Heart left ventricle (tissue), 16 donors: ENCODE measurements at regions of chr17 and their contacts with region 1.

Region 1: DNA sequence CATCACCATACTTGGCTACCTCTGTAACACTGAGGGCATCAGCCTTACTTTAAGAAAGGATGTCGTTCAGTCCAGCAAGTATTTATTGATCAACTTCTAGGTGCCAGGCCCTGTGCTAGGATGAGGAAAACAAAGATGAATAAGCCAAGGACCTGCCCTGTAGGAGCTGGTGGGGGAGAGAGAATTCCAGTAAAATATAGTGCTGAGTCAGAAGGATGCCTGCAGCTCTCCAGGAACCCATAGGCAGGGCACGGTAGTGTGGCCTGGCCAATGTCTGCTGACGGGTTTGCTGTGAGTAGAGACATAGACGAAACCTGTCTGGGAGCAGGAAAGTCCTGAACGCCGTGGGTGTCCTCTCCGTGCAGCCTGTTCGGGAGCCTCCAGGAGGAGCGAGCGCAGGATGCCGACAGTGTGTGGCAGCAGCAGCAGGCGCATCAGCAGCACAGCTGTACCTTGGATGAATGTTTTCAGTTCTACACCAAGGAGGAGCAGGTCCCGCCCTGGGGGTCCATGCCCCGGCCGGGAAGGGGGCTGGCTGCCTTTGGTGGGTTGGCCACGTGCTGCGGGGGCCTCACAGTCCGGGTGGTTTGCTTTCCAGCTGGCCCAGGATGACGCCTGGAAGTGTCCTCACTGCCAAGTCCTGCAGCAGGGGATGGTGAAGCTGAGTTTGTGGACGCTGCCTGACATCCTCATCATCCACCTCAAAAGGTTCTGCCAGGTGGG is 55.6 kb downstream of the USP43 start:
- DNase-seq: no peak
- ATAC-seq: no peak
- H3K4me3 ChIP-seq: no peak overlapping the region
- H3K27ac ChIP-seq: no peak overlapping the region
- H3K4me1 ChIP-seq: no peaks in the 10 kb centered on the region
- H3K27me3 ChIP-seq: peaks cover 0 to 2% (median 0%) of the 10 kb centered on the region in 9 donors
- CTCF ChIP-seq: no peak
- POLR2A ChIP-seq: no peak

Region 2: DNA sequence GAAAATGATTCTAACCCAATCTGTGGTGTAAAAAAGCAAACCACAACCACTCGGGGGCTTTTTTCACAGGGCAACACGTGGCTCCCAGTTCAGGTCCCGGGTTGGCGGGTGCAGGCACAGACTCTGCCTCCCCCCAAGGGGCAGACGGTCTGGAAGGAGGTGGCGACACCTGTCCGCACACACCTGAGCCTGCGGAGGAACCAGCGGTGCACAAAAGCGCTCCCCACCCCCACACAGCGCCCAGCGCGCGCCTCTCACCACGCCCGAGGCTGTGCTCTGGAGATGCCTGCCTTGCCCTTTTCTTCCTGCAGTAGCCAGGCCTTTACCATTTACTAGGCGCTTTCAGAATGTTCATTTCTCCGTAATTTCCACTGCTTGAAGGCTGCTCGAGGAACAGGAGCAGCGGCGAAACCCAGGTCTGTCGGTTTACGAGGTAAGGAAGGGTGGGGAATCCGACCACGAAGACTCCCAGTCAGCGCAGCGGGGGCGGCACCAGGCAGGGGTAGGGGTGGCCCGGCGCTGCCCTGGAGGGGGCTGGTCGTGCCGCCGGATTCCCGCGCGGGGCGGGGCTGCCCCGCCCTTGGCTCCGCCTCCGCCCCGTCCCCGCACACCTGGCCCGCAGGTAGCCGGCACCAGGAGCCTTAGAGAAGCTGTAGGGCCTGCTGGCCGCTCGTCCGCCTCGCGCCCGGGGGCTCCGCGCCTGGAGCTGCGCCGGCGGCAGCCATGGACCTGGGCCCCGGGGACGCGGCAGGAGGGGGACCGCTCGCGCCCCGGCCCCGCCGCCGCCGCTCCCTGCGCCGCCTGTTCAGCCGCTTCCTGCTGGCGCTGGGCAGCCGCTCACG is 55.8 kb before region 1 on chr17 and contains the start of gene USP43:
- intact Hi-C with region 1: loop called in 1 of 10 experiments (anchors 10 kb)
- DNase-seq: no peak
- ATAC-seq: peak in 3 of 4 donors; percentile 37 to 63 (median 62)
- H3K4me3 ChIP-seq: peak within 1 kb of the TSS; percentile 25 to 63 (median 49)
- H3K27ac ChIP-seq: no peak within 1 kb of the TSS
- H3K4me1 ChIP-seq: peaks cover 0 to 23% (median 9%) of the 10 kb centered on the region in 12 donors
- H3K27me3 ChIP-seq: peaks cover 11 to 78% (median 40%) of the 10 kb centered on the region in 9 donors
- CTCF ChIP-seq: no peak
- POLR2A ChIP-seq: no peak
- total RNA-seq, gene USP43: 0.12 to 0.41 (median 0.16) TPM in 3 of 9 donors, not detected in the others